PC-9 (cell line): ENCODE measurements at regions of chr1 and their contacts with region 1.

Region 1: DNA sequence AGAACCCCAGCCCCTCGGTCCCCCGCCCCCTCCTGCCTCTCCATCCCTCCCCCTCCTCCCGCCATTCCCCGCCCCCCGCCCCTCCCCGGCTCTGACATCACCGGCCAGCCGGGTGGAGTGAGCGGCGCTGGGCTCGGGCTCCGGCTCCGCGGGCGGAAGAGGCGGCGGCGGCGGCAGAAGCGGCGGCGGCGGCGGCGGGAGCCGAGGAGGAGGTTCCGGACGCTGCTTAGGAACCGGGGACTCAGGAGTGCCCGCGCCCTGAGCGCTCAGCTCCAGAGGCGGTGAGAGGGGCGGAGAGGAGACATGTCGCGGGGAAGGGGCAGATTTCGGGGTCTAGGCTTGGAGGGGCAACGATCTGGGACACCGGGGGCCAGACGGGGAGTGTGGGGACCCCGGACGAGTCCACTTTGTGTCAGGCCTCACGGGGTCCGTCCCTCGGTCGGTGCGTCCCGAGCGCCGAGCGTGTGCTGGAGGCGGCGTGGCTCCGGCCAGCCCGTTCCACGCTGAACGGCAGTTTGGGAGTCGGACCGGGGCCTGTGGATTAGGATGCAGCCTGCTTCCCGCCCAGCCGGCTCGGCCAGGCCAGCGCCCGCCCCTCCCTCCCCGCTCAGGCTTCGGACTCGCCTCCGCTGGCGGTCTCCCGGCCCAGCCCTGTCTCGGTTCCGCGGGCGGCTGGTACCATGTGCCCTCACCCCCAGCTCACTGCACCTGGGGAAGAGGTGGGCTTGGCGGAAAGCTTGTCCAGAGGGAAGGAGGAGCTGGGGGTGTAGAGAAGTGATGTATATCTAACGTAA is at the start of gene PEA15:
- DNase-seq: peak in 1 of 2 experiments; percentile 62
- H3K4me3 ChIP-seq: peak within 1 kb of the TSS; percentile 99
- H3K27ac ChIP-seq: peak within 1 kb of the TSS; percentile 67
- H3K4me1 ChIP-seq: peaks cover 22% of the 10 kb centered on the region
- H3K27me3 ChIP-seq: no peaks in the 10 kb centered on the region
- CTCF ChIP-seq: no peak
- total RNA-seq, gene PEA15: 84.7 and 139 TPM in 2 replicates

Region 2: DNA sequence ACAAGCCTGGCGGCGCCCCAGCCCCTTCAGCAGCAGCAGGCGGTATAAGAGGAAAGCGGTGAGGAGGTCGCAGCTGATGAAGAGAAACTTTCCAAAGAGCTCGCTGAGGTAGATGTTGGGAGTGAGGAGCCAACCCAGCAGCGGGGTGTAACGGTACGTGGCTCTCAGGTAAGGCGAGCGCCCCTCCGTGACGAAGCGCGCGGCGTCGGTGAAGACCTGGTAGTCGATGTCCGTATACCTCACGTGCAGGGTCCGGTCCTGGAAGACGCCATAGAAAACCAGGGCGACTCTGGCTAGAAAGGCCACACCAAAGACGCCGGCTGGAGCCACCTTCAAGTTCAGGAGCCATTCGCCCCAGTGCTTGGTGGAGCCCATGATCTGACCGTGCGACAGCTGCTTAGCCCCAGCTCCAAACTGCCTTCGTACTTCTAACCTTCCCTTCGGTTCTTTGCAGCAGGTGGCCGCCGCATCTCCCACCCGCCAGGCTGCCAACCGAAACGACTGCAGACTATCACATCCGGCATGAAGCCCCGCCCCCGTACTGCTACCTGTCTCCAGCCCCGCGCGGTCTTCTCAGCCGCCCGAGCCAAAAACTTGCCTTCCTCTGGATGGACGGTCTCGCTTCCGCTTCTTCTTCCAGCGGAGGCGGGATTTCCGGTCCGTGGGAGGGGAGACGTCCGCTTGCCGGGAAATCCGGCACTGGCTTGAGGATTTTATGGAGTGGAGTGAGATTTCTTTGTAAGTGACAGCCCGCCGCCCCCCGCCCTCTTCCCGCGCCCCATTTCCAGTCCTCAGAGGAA is 173.9 kb before region 1 on chr1 and contains the start of gene PIGM:
- CTCF ChIA-PET with region 1: no interaction called
- POLR2A ChIA-PET with region 1: no interaction called
- intact Hi-C with region 1: loop called (anchors 5 kb)
- DNase-seq: peak; percentile 94 to 95
- H3K4me3 ChIP-seq: peak within 1 kb of the TSS; percentile 83
- H3K27ac ChIP-seq: peak within 1 kb of the TSS; percentile 37; the same call in 1 of the 2 replicates
- H3K4me1 ChIP-seq: peaks cover 19% of the 10 kb centered on the region
- H3K27me3 ChIP-seq: no peaks in the 10 kb centered on the region
- CTCF ChIP-seq: no peak
- total RNA-seq, gene PIGM: 3.3 and 4.0 TPM in 2 replicates